ENCODE measurements at regions of chr14 and their contacts with region 1.

Region 1: DNA sequence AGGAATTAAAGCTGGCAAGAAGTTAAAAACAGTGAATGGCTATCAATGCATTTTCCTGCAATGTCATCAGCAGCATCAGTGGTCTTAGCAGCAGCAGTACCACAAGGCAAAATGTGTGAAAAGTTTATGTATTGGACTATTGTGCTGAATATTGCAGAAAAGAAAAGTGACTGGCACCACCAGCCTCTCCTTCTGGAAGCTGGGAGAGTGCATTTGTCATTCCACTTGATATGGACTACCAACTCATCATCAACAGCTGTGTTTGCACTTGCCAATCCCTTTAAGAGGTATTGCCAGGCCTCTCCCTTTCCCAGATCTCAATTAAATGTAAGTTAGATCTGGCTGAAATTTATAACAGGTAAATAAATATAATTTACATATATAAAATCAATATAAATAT is 151.0 kb upstream of the GZMB start:
- DNase-seq: no peak

Region 2: DNA sequence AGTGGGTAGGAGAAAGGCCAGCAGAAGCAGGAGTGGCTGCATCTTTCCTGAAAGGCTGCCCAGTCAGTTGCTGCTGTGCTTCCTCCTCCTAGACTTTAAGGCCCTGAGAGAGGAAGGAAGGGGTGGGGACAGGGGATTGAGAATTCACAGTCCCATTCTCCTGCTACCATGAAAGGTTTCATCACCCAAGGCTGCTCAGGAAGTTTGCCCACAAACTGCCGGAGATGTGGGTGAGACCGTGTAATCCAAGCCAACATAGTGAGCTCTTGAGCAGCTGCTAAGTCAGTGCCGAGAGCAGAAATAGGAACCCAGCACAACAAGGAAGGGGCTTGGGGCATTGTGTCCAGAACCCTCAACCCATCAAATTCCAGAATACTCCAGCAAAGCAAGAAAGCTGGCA is 208.8 kb before region 1 on chr14 and contains the start of gene CTSG:
- intact Hi-C with region 1: loop called in 1 of 2 experiments (anchors 5 kb)
- DNase-seq: no peak
- total RNA-seq, gene CTSG: 3.1 to 6.9 TPM

Measured in posterior vena cava (tissue), 2 donors.